ENCODE measurements at regions of chr12 and their contacts with region 1.

Region 1: DNA sequence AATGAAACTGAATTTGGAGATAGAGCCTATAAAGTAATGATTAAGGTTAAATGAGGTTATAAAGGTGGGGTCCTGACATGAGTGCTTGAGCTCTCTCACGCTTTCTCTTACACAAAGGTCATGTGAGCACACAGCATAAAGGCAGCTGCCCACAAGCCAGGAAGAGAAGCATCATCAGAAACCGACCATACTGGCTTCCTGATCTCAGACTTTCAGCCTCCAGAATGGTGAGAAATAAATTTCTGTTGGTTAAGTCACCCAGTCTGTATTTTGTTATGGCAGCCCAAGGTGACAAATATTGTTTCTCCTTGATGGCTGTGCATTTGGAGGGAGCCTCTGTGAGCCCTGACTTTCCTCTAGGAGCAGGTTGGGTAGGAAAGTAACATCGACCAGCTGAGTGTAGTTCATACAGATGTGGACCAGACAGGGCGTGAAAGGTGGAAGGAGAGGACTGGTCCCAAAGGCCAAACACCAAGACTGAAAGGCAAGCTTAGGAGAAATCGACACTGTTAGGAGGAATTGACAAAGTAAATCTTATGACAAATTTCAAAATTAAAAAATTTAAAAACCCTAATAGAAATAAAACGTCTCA is 97.6 kb upstream of the SLC38A2 start:
- DNase-seq: peak; percentile 53
- H3K4me3 Mint-ChIP-seq: peak overlapping the region; percentile 53
- H3K27ac Mint-ChIP-seq: peak overlapping the region; percentile 85
- H3K4me1 Mint-ChIP-seq: peaks cover 32% of the 10 kb centered on the region
- H3K27me3 Mint-ChIP-seq: no peaks in the 10 kb centered on the region

Region 2: DNA sequence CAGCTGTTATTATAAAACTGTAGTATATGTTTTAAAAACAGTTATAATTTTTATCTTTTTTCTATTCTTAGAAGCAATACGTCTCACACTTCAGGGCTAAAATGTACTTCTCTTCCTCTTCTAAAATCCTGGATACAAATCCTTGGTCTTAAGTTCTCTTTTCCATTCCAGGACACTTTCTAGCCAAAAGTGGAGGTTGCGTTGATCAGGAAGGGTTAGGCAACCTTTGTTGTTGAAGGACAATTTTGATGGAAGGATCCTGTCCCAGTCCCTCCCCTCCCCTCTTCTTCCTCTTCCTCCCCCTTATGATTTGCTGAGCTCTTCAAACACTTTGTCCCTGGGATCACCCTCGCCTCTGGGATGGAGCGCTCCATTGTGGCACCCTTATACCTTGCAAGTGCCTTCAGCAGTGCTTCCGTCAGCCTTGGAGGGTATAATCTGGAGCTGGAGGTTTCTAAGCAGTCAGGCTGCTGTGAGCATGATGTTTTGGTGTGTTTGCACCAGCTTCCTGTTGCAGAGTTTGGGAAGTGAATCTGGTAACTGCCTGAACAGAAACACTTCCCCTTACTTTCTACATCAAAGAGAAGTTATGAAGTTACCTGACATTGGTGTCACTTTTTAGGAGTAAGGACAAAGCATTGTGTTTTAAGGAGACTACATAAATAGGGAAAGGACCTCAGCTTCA is 10.1 kb before region 1 on chr12:
- CTCF ChIA-PET with region 1: interaction called, 12 read pairs
- DNase-seq: peak; percentile 51
- H3K4me3 Mint-ChIP-seq: peak overlapping the region; percentile 77
- H3K27ac Mint-ChIP-seq: peak overlapping the region; percentile 96
- H3K4me1 Mint-ChIP-seq: peaks cover 65% of the 10 kb centered on the region
- H3K27me3 Mint-ChIP-seq: no peaks in the 10 kb centered on the region

Measured in activated naive CD4-positive, alpha-beta T cell treated with anti-CD3 and anti-CD28 coated beads, Interleukin-2, amount 10 ng/mL, durations not matched to agents 7 days and 5 days (primary cell).